Endothelial cell of umbilical vein (primary cell): ENCODE measurements at regions of chr9 and their contacts with region 1.

Region 1: GRCh38 chr9:133955821-133956411 is 36.2 kb downstream of the VAV2 start:
- DNase-seq: peak; percentile 56
- H3K4me3 ChIP-seq: peak overlapping the region in 1 of 3 experiments; percentile 1
- H3K27ac ChIP-seq: peak overlapping the region; percentile 69
- H3K4me1 ChIP-seq: peaks cover 35% of the 10 kb centered on the region
- H3K27me3 ChIP-seq: no peaks in the 10 kb centered on the region
- CTCF ChIP-seq: peak in 1 of 2 donors; percentile 26
- POLR2A ChIP-seq: no peak

Region 2: DNA sequence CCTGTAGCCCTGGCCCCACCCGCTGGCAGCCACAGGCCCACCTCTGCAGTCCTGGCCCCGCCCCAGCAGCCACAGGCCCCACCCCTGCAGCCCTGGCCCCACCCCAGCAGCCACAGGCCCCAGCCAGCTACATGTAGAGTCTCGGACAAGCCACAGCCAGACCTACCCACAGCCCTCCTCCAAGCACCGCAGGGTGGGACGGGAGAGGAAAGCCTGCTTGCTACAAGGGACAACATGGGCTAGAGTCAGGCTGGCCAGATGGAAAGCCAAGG is 168.2 kb before region 1 on chr9:
- CTCF ChIA-PET with region 1: interaction called, 10 read pairs
- POLR2A ChIA-PET with region 1: no interaction called
- dilution Hi-C with region 1: no loop called
- intact Hi-C with region 1: loop called (anchors 2 kb)
- DNase-seq: no peak
- H3K4me3 ChIP-seq: no peak overlapping the region
- H3K27ac ChIP-seq: no peak overlapping the region
- H3K4me1 ChIP-seq: peaks cover 23% of the 10 kb centered on the region
- H3K27me3 ChIP-seq: no peaks in the 10 kb centered on the region
- CTCF ChIP-seq: no peak
- POLR2A ChIP-seq: no peak

Region 3: DNA sequence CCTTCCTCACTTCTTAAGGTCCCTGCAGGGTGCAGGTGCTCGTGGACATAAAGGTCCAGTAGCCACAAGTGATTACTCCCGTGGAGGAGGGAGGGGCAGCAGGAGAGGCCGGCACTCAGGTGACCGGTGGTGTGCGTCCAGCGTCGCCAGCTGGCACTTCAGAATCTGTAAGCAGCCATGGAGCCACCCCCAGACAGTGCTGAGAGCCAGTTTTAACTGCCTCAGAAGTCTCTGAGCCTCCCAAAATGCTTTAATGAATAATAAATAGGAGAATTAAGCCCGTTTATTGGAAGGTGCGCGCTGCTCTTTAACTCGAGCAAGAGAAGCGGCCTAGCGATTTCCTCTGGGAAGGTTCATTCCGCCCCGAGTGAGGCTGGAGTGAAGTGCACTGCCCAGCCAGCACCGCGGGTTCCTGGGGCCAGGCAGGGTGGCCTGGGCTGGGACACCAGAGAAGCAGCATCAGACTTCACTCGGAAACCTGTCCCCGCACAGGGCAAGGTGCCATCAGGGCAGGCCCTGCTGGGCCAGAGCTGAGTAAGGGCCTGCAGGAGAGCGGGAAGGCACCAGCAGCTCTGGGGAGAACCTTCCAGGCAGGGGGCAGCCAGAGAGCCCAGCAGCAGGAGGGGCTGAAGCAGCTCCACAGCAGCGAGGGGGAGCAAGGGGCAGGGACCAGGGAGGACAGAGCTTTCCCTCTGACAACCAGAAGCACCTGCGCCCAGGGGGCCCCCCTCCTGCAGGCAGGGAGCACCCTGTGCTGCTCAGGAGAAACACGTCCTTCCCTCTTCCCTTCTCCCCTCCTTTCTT is 25.0 kb before region 1 on chr9:
- CTCF ChIA-PET with region 1: interaction called, 8 read pairs
- POLR2A ChIA-PET with region 1: no interaction called
- dilution Hi-C with region 1: no loop called
- intact Hi-C with region 1: loop called (anchors 1 kb)
- DNase-seq: no peak
- H3K4me3 ChIP-seq: no peak overlapping the region
- H3K27ac ChIP-seq: no peak overlapping the region
- H3K4me1 ChIP-seq: peaks cover 24% of the 10 kb centered on the region
- H3K27me3 ChIP-seq: no peaks in the 10 kb centered on the region
- CTCF ChIP-seq: no peak
- POLR2A ChIP-seq: no peak

Region 4: GRCh38 chr9:133945314-133945975 is 10.5 kb before region 1 on chr9:
- CTCF ChIA-PET with region 1: interaction called, 20 read pairs
- POLR2A ChIA-PET with region 1: no interaction called
- dilution Hi-C with region 1: no loop called
- intact Hi-C with region 1: loop called (anchors 1 kb)
- DNase-seq: no peak
- H3K4me3 ChIP-seq: no peak overlapping the region
- H3K27ac ChIP-seq: peak overlapping the region; percentile 76
- H3K4me1 ChIP-seq: peaks cover 32% of the 10 kb centered on the region
- H3K27me3 ChIP-seq: no peaks in the 10 kb centered on the region
- CTCF ChIP-seq: no peak
- POLR2A ChIP-seq: no peak